OCI-LY7 (cell line): ENCODE measurements at regions of chr22 and their contacts with region 1.

Region 1: DNA sequence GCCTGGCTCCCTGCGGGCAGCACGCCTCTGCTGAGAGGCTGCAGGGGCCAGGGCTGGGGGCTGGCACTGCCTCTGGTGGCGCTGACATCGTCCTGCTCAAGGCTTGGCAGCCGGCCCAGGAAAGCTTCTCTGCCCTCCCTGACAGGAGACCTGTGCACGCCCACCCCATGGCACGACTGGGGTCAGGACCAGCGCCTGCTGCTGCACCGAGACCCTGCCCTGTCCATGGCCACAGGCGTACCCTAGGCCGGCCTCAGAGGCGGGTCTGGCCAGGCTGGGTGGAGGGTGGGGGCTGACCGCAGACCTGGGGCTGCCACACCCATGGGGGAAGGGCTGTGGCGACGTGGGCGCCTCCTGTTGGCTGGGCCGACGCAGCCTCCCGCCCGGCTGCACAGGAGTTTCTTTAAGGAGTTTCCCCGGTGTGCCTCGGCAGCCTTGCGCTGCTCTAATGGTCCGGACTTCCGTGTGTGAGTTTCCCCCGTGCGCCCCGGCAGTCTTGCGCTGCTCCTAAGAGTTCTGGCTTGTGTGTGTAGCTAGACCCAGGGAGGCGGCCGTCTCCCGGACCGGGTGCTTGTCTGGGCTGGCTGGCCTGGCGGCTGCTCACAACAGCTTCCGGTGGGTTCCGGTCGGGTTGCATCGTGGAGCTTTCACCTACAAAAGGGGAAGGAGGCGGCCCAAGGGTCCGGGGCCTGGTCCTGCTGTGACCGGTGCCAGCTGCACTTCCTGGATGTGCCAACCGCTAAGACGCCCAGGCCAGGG is 4.6 kb downstream of the TRABD start:
- DNase-seq: peak; percentile 95
- H3K4me3 ChIP-seq: peak overlapping the region; percentile 68
- H3K27ac ChIP-seq: peak overlapping the region; percentile 99
- H3K4me1 ChIP-seq: peaks cover 73% of the 10 kb centered on the region
- CTCF ChIP-seq: peak; percentile 56; the same call in 1 of the 2 replicates

Region 2: DNA sequence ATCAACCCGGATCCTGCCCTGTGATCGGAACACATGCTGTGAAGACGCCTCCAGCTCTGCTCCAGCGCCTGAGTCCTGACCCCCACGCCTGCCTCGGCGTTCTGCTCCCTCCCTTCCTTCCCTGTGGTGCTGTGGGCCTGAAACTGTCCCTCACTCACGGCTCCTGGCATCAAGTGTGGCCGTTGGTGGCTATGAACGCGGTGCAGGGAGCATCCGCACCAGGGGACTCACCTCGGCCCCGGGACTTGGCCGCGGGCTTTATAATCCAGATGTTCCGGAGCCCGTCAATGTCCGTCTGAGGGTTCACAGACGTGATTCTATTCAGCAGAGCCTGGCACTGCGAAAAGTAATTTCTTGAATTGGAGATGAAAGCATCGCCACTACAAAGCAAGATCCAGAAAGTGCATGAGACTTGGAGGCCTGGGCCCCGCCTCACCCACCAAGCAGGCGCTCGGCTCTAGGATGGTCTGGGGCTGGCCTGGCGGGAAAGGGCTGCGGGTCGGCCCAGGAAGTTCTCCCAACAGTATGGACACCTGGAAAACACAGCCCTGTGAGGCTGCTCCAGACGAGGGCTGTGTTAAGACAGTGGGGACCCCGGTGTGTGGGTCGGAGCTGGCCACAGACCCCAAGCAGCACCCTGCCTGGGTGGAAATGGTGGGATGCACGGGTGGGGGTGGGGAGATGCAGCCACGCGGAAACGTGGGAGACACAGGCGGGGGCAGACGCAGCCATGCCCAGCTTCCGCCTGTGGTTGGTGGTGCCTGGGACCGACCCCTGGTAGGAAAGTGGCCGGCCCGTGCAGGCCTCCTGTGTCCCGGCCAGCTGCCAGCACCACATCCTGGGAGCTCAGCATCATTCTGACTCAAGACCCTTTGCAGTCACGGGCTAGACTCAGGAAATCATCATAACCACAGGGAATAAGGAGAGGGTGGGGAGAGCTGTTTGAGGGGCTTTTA is 156.0 kb before region 1 on chr22:
- CTCF ChIA-PET with region 1: no interaction called
- POLR2A ChIA-PET with region 1: no interaction called
- intact Hi-C with region 1: no loop called
- DNase-seq: no peak
- H3K4me3 ChIP-seq: no peak overlapping the region
- H3K27ac ChIP-seq: no peak overlapping the region
- H3K4me1 ChIP-seq: peaks cover 7% of the 10 kb centered on the region
- CTCF ChIP-seq: no peak

Region 3: GRCh38 chr22:50105208-50106100 is 84.9 kb before region 1 on chr22:
- CTCF ChIA-PET with region 1: interaction called, 3 read pairs
- POLR2A ChIA-PET with region 1: no interaction called
- intact Hi-C with region 1: loop called (anchors 2 kb)
- DNase-seq: peak; percentile 81
- H3K4me3 ChIP-seq: peak overlapping the region; percentile 48
- H3K27ac ChIP-seq: peak overlapping the region; percentile 51
- H3K4me1 ChIP-seq: peaks cover 60% of the 10 kb centered on the region
- CTCF ChIP-seq: no peak

Region 4: GRCh38 chr22:50314455-50315288 is 124.3 kb after region 1 on chr22:
- CTCF ChIA-PET with region 1: no interaction called
- POLR2A ChIA-PET with region 1: no interaction called
- intact Hi-C with region 1: loop called (anchors 5 kb)
- DNase-seq: peak; percentile 93
- H3K4me3 ChIP-seq: peak overlapping the region; percentile 71
- H3K27ac ChIP-seq: peak overlapping the region; percentile 91
- H3K4me1 ChIP-seq: peaks cover 64% of the 10 kb centered on the region
- CTCF ChIP-seq: no peak

Region 5: GRCh38 chr22:50474668-50475492 is 284.5 kb after region 1 on chr22 and contains the start of gene SBF1:
- CTCF ChIA-PET with region 1: interaction called, 3 read pairs
- POLR2A ChIA-PET with region 1: no interaction called
- intact Hi-C with region 1: loop called (anchors 5 kb)
- DNase-seq: peak; percentile 92
- H3K4me3 ChIP-seq: peak within 1 kb of the TSS; percentile 96
- H3K27ac ChIP-seq: peak within 1 kb of the TSS; percentile 95
- H3K4me1 ChIP-seq: peaks cover 46% of the 10 kb centered on the region
- CTCF ChIP-seq: no peak
- total RNA-seq, gene SBF1: 134 and 177 TPM in 2 replicates